AG04449 (cell line): ENCODE measurements at regions of chr20 and their contacts with region 1.

Region 1: GRCh38 chr20:33862709-33863403 is 51.7 kb downstream of the CHMP4B start:
- DNase-seq: no peak
- H3K4me3 ChIP-seq: peak overlapping the region; percentile 15
- CTCF ChIP-seq: peak; percentile 88

Region 2: GRCh38 chr20:33875055-33875454 is 12.2 kb after region 1 on chr20:
- CTCF ChIA-PET with region 1: interaction called, 12 read pairs
- POLR2A ChIA-PET with region 1: no interaction called
- DNase-seq: no peak
- H3K4me3 ChIP-seq: no peak overlapping the region
- CTCF ChIP-seq: no peak

Region 3: DNA sequence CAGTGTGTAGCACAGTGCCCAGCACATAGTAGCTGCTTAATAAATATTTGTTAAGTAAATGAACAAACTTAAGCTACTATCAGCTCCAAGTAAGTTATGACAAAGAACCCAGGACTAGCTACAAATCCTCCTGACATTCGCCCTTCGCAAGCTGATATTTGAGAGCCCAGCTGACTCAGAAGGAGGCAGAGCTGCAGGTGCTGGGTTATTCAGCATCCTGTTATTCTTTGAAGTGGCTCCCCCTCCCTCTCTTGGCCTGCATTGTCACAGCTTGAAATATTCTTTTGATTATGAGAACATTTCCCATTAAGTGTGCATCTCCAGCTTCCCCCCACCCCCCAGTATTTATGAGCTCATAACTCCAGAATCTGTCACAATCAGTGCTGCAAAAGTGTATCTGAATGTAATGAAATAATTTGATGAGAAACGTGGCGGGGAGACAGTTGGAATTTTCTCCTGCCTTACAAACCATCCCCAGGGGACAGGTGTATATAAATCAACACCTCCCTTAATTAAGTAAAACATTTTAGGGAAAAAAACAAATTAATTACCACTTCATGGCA is 52.1 kb after region 1 on chr20:
- CTCF ChIA-PET with region 1: interaction called, 12 read pairs
- POLR2A ChIA-PET with region 1: no interaction called
- DNase-seq: no peak
- H3K4me3 ChIP-seq: no peak overlapping the region
- CTCF ChIP-seq: no peak

Region 4: DNA sequence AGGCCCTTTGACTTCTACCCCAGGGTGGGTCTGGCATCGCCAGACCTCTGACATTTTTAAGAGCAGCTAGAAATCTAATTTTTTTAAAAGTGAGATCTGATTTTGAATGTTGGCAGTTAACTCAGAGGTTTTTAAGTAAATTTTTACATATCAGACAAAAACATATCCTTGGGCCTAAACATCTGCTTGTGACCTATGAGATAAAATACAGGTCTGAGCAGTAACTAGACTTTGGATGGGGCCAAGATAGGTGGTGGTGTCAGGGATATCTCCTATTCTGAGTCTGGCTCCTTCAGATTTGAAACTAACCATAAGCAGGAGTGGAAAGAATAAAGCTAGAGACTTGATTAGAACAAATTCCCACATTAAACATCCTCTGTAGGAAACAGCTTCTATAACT is 148.4 kb after region 1 on chr20:
- CTCF ChIA-PET with region 1: no interaction called
- POLR2A ChIA-PET with region 1: no interaction called
- DNase-seq: no peak
- H3K4me3 ChIP-seq: no peak overlapping the region
- CTCF ChIP-seq: no peak

Region 5: DNA sequence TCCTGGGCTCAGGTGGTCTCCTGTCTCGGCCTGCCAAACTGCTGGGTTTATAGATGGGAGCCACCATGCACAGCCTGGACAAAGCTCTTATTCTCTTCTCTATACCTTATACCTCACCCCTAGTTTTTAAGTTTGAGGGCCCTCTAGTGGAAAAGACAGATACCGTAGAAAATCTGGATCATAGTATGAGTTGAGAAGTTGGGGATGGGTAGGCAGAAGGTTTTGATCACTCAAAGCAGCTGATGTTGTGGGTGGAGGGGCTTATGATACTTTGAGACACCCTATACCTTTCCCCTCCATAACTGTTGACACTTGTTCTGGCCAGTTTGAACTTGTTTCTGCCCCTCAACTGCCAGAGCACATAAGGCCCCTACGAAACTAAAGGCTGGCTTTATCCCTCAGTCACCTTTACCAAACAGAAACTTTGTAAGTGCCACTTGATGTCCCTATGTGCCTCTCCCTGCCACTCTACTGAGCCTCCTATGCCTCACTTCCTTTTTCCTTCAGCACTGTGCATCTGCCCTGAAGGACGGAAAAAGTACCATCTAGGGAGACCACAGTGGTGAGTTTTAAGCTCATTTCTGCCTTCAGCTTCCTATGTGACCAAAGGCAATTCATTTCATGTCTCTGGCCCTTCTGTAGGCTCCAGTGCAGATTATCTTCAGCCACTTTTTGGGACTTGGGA is 159.4 kb after region 1 on chr20:
- CTCF ChIA-PET with region 1: interaction called, 10 read pairs
- POLR2A ChIA-PET with region 1: no interaction called
- DNase-seq: no peak
- H3K4me3 ChIP-seq: no peak overlapping the region
- CTCF ChIP-seq: peak; percentile 19

Region 6: GRCh38 chr20:34058831-34059230 is 196.0 kb after region 1 on chr20:
- CTCF ChIA-PET with region 1: interaction called, 12 read pairs
- POLR2A ChIA-PET with region 1: no interaction called
- DNase-seq: no peak
- H3K4me3 ChIP-seq: no peak overlapping the region
- CTCF ChIP-seq: no peak

Region 7: DNA sequence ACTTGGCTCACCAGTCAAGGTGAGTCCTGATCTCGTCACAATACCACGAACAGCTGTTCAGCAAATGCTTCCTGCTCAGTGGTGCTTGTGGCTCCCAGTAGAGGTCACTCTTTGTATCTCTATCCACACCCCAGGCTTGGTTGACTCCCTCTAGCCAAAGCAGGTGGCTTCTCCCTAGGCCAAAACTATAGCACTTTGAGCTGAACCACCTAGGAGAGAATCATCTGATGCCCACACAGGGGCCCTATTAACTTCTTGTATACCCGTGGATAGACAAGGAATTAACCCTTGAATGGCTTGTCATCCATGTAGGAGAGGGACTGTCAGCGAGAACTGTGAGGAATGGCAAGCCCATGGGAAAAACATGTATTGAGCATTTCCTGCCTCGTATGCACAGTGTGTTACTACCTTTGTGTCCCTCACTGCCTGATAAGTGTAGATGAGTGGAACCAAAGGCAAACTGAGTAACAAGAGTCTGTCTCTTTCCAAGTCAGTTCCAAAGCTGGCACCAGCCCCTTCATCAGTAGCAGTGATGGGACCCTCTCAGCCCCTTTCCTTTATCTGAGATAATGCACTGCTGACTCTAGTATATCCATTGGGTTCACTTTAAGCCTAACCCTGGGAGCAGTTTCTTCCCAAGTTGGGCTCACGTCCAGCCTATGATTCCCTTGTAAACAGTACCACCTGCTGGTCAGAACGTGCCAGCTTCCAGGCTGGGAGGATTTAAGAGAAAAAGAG is 206.7 kb after region 1 on chr20:
- CTCF ChIA-PET with region 1: interaction called, 155 read pairs
- POLR2A ChIA-PET with region 1: no interaction called
- DNase-seq: no peak
- H3K4me3 ChIP-seq: no peak overlapping the region
- CTCF ChIP-seq: peak; percentile 70

Region 8: DNA sequence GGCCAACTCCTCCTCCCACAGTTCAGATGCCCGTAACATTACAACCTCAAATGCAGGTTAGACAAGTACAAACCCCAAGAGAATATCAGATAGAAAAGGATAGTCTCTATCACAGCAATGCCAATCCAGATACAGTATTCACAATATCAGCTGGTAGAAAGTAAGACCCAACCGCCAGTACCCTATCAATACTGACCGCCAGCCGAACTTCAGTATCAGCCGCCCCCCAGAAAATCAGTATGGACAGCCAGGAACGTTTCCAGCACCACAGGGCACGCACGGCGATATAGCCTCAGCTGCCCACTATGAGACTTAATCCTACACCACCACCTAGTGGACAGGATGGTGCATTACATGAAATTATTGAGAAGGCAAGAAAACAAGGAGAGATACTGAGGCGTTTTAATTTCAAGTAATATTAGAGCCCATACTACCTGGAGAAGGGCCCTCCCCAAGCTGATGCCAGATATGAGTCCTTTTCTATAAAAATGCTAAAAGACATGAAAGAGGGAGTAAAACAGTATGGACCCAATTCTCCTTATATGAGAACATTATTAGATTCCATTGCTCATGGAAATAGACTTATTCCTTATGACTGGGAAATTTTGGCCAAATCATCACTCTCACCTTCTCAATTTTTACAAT is 266.8 kb after region 1 on chr20:
- CTCF ChIA-PET with region 1: interaction called, 27 read pairs
- POLR2A ChIA-PET with region 1: no interaction called
- DNase-seq: no peak
- H3K4me3 ChIP-seq: no peak overlapping the region
- CTCF ChIP-seq: peak; percentile 71